Posterior vena cava (tissue), 2 donors: ENCODE measurements at regions of chr18 and their contacts with region 1.

Region 1: GRCh38 chr18:49510393-49511115 is 23.5 kb upstream of the C18orf32 start:
- DNase-seq: peak; percentile 76

Region 2: GRCh38 chr18:49459404-49460171 is 51.0 kb before region 1 on chr18:
- intact Hi-C with region 1: no loop called
- DNase-seq: no peak

Region 3: DNA sequence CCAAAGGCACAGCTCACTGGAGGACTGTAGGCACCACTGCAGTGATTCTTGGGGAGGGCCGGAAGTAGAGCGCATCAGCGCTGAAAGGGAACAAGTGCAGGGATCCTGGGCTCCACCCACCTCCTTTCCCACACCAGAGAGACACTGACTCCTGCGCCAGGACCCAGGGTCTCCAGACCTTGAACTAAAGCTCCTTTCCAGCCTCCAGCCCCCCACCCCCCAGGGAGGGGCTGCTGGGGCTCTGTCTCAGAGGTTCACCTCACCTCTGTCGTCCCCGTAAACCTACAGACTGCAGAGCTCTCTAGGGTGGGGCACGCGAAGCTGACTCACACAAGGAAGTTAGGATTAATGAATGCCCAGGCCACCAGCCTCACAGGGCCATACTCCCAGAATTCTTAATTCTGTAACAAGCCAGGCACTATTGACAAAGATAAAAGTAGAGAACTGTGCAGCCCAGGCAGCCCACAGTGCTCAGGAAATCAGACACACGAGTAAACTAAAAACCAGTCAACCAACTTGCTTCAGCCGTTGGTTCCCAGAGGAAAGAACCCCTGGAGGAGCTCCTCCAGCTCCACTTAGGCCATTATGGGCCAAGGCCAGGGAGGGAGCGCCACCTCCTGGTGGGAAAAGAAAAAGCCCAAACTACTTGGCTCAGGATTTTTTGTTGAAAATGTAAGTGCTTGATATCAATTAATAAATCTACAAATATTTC is 347.9 kb after region 1 on chr18:
- intact Hi-C with region 1: loop called (anchors 2 to 5 kb)
- DNase-seq: peak; percentile 85